ENCODE measurements at regions of chr17 and their contacts with region 1.

Region 1: GRCh38 chr17:1365445-1366039 is 34.5 kb downstream of the YWHAE start:
- DNase-seq: peak; percentile 53
- ATAC-seq: peak; percentile 74
- H3K4me3 Mint-ChIP-seq: no peak overlapping the region
- H3K27ac Mint-ChIP-seq: peak overlapping the region; percentile 77
- H3K4me1 Mint-ChIP-seq: peaks cover 62% of the 10 kb centered on the region
- H3K27me3 Mint-ChIP-seq: no peaks in the 10 kb centered on the region
- CTCF ChIP-seq: peak; percentile 68

Region 2: DNA sequence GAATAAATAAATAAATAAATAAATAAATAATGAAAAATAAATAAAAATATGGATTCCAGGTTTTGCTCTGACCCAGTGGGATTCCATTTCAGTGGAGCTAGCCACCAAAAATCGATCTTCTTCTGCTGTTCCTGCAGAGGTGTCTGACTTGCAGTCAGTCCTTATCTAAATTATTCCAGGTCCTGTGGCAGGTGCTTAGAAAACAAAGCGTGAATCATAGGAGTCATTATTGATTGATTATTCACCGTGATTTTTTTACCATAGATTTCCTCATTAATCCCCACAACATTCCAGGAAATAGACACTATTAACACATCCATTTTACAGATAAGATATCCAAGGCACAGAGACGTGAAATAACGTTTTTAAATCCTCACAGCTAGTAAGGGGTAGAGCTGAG is 154.3 kb before region 1 on chr17:
- CTCF ChIA-PET with region 1: no interaction called
- POLR2A ChIA-PET with region 1: no interaction called
- DNase-seq: no peak
- ATAC-seq: no peak
- H3K4me3 Mint-ChIP-seq: no peak overlapping the region
- H3K27ac Mint-ChIP-seq: no peak overlapping the region
- H3K4me1 Mint-ChIP-seq: peaks cover under 1% of the 10 kb centered on the region; the same call in 1 of the 2 replicates
- H3K27me3 Mint-ChIP-seq: no peaks in the 10 kb centered on the region; the same call in 1 of the 2 replicates
- CTCF ChIP-seq: no peak

Region 3: DNA sequence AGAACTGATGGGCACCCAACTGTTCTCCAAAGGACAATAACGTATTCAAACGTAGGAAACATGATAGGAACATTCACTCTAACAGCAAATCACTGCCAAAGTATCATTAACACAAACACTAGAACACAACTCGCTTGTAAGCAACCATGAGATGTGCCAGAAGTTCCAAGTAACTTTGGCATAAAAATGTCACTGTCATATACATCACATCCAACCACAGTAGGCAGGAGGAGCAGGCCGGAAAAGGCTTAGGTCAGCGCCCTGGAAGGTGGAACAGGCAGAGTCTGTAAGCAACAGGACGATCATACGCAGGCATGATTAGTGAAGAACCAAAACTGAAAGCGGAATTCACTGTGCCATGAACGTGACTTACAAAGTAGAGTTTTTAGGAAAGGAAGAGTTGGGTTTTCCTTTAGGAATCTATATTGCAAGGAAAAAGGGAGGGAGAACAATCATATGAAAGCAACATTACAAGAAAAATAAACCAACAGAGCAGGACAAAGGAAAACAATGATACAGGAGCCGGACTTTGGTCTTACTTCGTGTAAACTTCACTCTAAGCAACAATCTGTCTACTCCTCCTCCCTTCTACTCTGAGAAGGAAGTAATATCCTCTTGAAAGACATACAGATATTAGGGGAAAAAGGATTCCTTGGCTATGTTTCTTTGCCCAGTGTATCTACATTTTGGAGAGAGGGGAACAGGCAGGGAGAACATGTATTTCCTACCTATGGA is 17.8 kb before region 1 on chr17:
- CTCF ChIA-PET with region 1: interaction called, 25 read pairs
- POLR2A ChIA-PET with region 1: no interaction called
- DNase-seq: no peak
- ATAC-seq: no peak
- H3K4me3 Mint-ChIP-seq: no peak overlapping the region
- H3K27ac Mint-ChIP-seq: peak overlapping the region; percentile 86
- H3K4me1 Mint-ChIP-seq: peaks cover 37% of the 10 kb centered on the region
- H3K27me3 Mint-ChIP-seq: no peaks in the 10 kb centered on the region
- CTCF ChIP-seq: no peak

Region 4: DNA sequence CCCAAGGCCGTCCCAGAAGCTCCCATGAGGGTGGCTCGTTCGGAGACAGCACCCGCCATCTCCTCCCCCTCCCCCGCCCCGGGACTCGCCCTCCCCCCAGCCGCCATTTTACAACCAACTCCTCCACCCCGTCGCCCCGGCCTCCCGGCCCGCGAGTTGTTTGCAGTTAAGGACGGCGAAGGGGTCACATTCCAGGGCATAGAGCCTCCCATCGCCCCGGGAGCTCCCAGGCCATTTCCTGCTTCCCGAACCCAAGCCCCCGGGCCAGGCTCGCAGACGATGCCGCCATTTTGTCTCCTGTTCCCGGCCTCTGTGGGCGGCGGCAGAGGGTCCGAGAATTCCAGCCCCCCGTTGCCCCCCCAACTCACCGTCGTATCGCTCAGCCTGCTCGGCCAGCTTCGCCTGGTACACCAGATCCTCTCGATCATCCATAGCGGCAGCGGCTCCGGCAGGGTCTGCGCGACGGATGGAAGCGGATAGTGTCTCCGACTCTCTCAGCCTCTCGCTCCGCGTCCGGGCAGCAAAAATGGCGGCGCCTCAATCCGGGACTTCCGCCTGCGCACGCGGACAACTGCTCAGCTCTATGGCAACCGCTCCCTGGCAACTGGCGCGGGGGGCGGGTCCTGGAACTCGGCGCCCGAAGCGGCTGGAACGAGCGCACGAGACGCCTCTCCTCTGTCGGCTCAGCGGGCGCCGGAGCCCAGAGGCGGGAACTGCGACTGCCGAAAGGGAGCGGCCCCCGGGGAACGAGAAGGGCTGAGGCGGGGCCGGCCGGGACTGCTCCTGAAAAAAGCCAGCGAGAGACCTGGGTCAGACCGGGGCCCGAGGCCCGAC is 34.4 kb after region 1 on chr17 and contains the start of gene YWHAE:
- CTCF ChIA-PET with region 1: interaction called, 20 read pairs
- POLR2A ChIA-PET with region 1: interaction called, 9 read pairs
- DNase-seq: peak; percentile 99
- ATAC-seq: peak; percentile 92
- H3K4me3 Mint-ChIP-seq: peak within 1 kb of the TSS; percentile 99
- H3K27ac Mint-ChIP-seq: peak within 1 kb of the TSS; percentile 99
- H3K4me1 Mint-ChIP-seq: peaks cover 28% of the 10 kb centered on the region
- H3K27me3 Mint-ChIP-seq: no peaks in the 10 kb centered on the region; the same call in 1 of the 2 replicates
- CTCF ChIP-seq: no peak
- total RNA-seq, gene YWHAE: 1,033 to 1,180 TPM (median 1,148 TPM) in 3 replicates

Region 5: DNA sequence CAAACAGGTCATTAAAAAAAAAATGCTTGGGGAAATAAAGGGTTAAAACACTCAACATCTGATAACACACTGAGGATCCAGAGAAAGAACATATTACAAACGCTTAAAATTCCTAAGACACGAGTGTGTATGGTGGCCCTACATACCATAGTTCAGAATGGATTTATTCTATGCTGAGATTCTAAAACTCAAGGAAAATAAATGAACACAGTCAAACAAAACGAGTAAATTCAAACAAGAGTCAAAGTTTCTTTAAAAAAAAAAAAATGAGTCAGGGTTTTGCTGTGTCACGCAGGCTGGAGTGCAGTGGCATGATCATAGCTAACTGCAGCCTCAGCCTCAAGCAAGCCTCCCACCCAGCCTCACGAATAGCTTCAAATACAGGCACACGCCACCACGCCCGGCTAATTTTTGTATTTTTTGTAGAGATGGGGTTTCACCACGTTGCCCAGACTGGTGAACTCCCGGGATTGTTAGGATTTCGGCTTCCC is 73.1 kb after region 1 on chr17:
- CTCF ChIA-PET with region 1: interaction called, 11 read pairs
- POLR2A ChIA-PET with region 1: no interaction called
- DNase-seq: no peak
- ATAC-seq: no peak
- H3K4me3 Mint-ChIP-seq: no peak overlapping the region
- H3K27ac Mint-ChIP-seq: peak overlapping the region; percentile 73
- H3K4me1 Mint-ChIP-seq: no peaks in the 10 kb centered on the region
- H3K27me3 Mint-ChIP-seq: no peaks in the 10 kb centered on the region
- CTCF ChIP-seq: no peak

Region 6: GRCh38 chr17:1516388-1517161 is 151.0 kb after region 1 on chr17 and contains the start of gene INPP5K:
- CTCF ChIA-PET with region 1: interaction called, 53 read pairs
- POLR2A ChIA-PET with region 1: no interaction called
- DNase-seq: peak; percentile 93
- ATAC-seq: peak; percentile 93
- H3K4me3 Mint-ChIP-seq: peak within 1 kb of the TSS; percentile 88
- H3K27ac Mint-ChIP-seq: peak within 1 kb of the TSS; percentile 97
- H3K4me1 Mint-ChIP-seq: peaks cover 14% of the 10 kb centered on the region
- H3K27me3 Mint-ChIP-seq: no peaks in the 10 kb centered on the region
- CTCF ChIP-seq: no peak
- total RNA-seq, gene INPP5K: 17.1 to 26.8 TPM (median 18.5 TPM) in 3 replicates

Region 7: GRCh38 chr17:1661045-1661444 is 295.5 kb after region 1 on chr17:
- CTCF ChIA-PET with region 1: no interaction called
- POLR2A ChIA-PET with region 1: no interaction called
- DNase-seq: no peak
- ATAC-seq: no peak
- H3K4me3 Mint-ChIP-seq: no peak overlapping the region
- H3K27ac Mint-ChIP-seq: no peak overlapping the region
- H3K4me1 Mint-ChIP-seq: no peaks in the 10 kb centered on the region
- H3K27me3 Mint-ChIP-seq: no peaks in the 10 kb centered on the region
- CTCF ChIP-seq: no peak